Ascending aorta (tissue), 2 donors: ENCODE measurements at regions of chr13 and their contacts with region 1.

Region 1: GRCh38 chr13:28636674-28637317 is 22.1 kb upstream of the POMP start:
- DNase-seq: peak in 1 of 2 donors; percentile 68
- H3K4me3 ChIP-seq: no peak overlapping the region
- H3K27ac ChIP-seq: no peak overlapping the region
- H3K4me1 ChIP-seq: peaks cover 0 to 16% of the 10 kb centered on the region in 2 donors
- H3K27me3 ChIP-seq: no peaks in the 10 kb centered on the region
- CTCF ChIP-seq: peak; percentile 64 to 74 (median 72)

Region 2: DNA sequence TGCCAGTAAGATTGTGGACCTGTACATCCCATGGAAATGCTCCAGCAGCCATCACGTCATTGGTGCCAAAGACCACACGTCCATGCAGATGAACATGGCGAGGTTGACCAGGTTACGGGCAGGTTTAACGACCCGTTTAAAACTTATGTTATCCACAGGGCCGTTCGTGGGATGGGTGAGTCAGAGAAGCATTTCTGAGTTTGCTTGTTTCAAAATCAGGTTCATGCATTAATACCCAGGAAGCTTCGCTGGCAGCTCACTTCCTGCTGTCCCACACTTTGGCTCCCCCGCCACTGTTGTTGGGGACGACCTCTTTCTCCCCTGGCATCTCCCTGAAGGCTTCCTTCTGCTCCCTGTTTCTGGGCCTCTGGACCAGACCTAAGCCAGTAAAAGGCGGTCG is 1659.2 kb before region 1 on chr13:
- intact Hi-C with region 1: loop called (anchors 5 kb)
- DNase-seq: no peak
- H3K4me3 ChIP-seq: no peak overlapping the region
- H3K27ac ChIP-seq: no peak overlapping the region
- H3K4me1 ChIP-seq: peaks cover 0 to 2% of the 10 kb centered on the region in 2 donors
- H3K27me3 ChIP-seq: no peaks in the 10 kb centered on the region
- CTCF ChIP-seq: no peak

Region 3: GRCh38 chr13:28077231-28077630 is 559.6 kb before region 1 on chr13:
- intact Hi-C with region 1: no loop called
- DNase-seq: no peak
- H3K4me3 ChIP-seq: no peak overlapping the region
- H3K27ac ChIP-seq: no peak overlapping the region
- H3K4me1 ChIP-seq: no peaks in the 10 kb centered on the region
- H3K27me3 ChIP-seq: no peaks in the 10 kb centered on the region
- CTCF ChIP-seq: no peak

Region 4: DNA sequence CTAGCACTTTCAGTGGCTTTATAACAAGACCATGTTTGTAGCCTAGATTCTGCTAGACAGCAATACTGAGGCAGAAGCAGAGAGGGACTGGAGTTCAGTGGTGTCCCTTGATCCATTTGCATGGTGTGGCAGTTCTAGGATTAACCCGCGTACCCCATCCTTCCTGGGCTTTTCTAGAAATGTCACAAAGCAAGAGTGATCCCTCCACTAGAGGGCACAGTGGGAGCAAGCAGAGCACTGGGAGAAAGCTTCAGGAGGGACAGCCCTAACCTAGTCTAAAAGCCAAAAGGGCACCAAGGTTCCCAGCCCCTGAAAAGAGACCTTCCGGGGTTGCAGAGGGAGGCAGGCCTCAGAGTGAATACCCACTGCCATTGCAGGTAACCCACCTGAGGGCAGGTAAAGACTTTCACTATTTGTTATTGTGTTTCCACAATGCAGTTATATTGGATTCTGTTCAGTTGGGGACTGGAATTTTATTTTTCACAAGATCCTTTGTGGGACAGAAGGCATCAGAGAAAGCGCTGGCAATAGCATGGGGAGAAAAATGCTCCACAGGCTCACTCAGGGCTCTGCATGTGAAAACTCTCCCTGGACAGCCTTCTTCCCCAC is 312.5 kb before region 1 on chr13:
- intact Hi-C with region 1: loop called (anchors 5 kb)
- DNase-seq: peak in 1 of 2 donors; percentile 72
- H3K4me3 ChIP-seq: no peak overlapping the region
- H3K27ac ChIP-seq: no peak overlapping the region
- H3K4me1 ChIP-seq: peaks cover 0 to 4% of the 10 kb centered on the region in 2 donors
- H3K27me3 ChIP-seq: no peaks in the 10 kb centered on the region
- CTCF ChIP-seq: peak; percentile 40 to 71 (median 48)